Ascending aorta (tissue), 2 donors: ENCODE measurements at regions of chr18 and their contacts with region 1.

Region 1: DNA sequence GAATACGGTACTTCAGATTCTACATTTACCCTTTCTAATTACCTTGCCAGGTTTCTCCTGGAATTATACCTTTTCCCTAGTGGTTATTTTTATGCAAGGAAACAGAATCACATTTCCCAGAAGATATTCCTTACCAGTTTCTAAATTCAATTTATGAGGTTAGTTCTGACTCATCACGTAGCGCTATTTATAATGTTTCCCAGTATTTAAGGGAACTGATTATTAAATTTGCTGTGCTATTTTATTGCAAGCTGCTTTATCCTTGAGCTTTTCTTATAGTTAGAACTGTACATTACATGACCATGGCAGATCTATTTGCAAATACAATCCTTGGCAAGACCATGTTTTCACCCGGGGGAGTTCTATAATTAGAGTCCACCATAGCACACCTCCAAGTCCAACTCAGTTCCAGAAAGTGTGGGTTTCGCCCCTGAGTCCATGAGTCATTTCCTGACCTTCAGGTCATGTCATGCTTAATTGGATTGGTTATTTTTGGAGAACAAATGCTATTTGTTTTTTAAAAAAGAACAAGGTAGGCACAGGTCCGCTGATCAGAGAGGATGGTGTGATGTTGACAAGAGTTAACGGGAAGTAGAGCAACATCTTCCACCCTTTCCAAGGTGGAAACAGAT is 126.6 kb downstream of the ZNF532 start:
- DNase-seq: peak in 1 of 2 donors; percentile 68
- H3K4me3 ChIP-seq: no peak overlapping the region
- H3K27ac ChIP-seq: peak overlapping the region; percentile 93 to 95
- H3K4me1 ChIP-seq: peaks cover 19 to 57% of the 10 kb centered on the region in 2 donors
- H3K27me3 ChIP-seq: no peaks in the 10 kb centered on the region
- CTCF ChIP-seq: peak in 1 of 3 experiments; percentile 28

Region 2: GRCh38 chr18:58864146-58865032 is 126.9 kb before region 1 on chr18 and contains the start of gene ZNF532:
- intact Hi-C with region 1: loop called (anchors 5 kb)
- DNase-seq: no peak
- H3K4me3 ChIP-seq: peak within 1 kb of the TSS; percentile 52 to 69
- H3K27ac ChIP-seq: peak within 1 kb of the TSS; percentile 99 to 100
- H3K4me1 ChIP-seq: peaks cover 16 to 74% of the 10 kb centered on the region in 2 donors
- H3K27me3 ChIP-seq: no peaks in the 10 kb centered on the region
- CTCF ChIP-seq: no peak
- total RNA-seq, gene ZNF532: 161 TPM

Region 3: DNA sequence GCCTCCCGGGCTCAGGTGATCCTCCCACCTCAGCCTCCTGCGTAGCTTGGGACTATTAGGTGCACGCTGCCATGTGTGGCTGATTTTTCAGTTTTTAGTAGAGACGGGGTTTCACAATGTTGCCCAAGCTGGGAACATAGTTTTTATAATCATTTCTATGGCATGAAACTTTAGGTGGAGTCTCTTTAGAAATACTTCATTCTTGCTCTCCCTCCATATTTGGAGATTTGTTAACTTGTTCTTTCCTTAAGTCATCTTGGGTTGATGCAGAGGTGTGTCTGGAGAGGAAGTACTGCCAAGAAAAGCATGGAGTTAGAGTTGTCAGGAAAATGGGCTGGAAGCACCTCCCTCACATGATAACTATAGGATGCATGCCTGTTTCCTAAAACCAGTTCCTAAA is 109.2 kb before region 1 on chr18:
- intact Hi-C with region 1: loop called (anchors 2 kb)
- DNase-seq: no peak
- H3K4me3 ChIP-seq: no peak overlapping the region
- H3K27ac ChIP-seq: peak overlapping the region; percentile 72 to 77
- H3K4me1 ChIP-seq: peaks cover 16 to 53% of the 10 kb centered on the region in 2 donors
- H3K27me3 ChIP-seq: no peaks in the 10 kb centered on the region
- CTCF ChIP-seq: no peak

Region 4: GRCh38 chr18:58960946-58961722 is 30.1 kb before region 1 on chr18:
- intact Hi-C with region 1: loop called (anchors 2 kb)
- DNase-seq: peak in 1 of 2 donors; percentile 77
- H3K4me3 ChIP-seq: no peak overlapping the region
- H3K27ac ChIP-seq: peak overlapping the region; percentile 29 to 54
- H3K4me1 ChIP-seq: peaks cover 0 to 12% of the 10 kb centered on the region in 2 donors
- H3K27me3 ChIP-seq: no peaks in the 10 kb centered on the region
- CTCF ChIP-seq: no peak

Region 5: DNA sequence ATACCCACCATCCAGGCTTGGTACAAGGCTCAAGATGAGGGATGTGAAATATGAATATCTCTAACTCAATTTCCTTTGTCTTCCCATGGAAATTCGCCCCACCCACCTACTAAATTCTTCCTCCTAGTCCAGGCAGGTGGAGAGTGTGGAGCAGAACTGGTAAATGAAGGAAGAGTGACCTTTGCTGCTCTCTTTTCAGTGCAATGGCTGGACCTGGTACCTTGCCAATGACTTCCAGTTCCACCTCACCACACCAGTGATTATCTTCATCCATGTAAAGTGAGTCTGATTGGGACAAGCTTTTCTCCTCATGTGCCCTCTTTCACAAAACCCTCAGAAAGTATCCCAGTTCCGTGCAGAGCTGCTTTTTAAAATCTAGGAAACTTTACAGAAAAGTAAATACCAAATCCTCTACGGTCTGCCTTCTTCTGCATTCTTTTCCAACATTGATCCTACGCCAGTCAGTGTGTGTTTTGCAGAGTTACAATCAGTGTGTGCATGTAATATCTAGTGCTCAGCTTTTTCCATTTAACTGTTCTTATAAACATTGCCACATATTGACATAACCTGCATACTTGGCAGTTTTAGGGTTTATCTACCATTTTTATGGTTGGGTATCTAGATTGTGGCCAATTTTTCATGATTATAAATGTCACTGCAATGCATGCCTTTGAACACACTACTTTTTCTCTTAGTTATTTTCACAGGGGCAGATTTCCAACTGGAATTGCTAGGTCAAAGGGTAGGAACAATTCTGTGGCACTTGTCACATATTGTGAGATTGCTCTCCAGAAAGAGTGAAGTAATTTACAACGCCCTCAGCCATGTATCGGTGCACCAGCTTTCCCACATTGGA is 61.9 kb after region 1 on chr18:
- intact Hi-C with region 1: no loop called
- DNase-seq: peak in 1 of 2 donors; percentile 62
- H3K4me3 ChIP-seq: no peak overlapping the region
- H3K27ac ChIP-seq: peak overlapping the region; percentile 71 to 83
- H3K4me1 ChIP-seq: peaks cover 9 to 44% of the 10 kb centered on the region in 2 donors
- H3K27me3 ChIP-seq: no peaks in the 10 kb centered on the region
- CTCF ChIP-seq: no peak